Vagina (tissue), 2 donors: ENCODE measurements at regions of chr2 and their contacts with region 1.

Region 1: DNA sequence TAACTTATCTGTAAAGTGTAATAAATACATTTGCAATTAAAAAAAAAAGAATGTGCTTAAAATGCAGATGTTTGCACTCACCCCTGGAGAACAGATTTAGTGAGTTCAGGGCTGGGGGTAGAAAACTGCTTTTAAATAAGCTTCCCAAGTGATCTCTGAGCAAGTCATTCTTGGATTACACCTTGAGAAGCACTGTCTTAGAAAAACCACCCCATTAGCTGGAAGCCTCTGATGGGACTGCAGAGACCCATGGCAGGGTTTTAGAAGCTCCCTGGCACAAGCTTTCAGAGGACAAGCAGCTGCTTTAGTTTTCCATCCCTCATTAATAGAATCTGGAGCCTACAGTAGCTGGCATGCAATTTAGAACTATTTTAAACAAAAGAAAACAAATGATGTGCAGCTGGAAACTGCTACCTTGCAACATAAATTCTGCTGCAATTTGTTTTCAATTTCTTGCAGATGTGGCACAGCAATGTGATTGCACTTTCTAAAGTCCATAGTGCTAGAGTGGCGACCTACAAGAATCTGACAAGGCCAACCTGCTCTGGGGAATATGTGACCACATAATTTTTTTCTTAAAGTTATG is 141.5 kb downstream of the CDC42EP3 start:
- DNase-seq: no peak
- H3K4me3 ChIP-seq: no peak overlapping the region
- H3K27ac ChIP-seq: no peak overlapping the region
- H3K4me1 ChIP-seq: no peaks in the 10 kb centered on the region
- H3K27me3 ChIP-seq: no peaks in the 10 kb centered on the region
- CTCF ChIP-seq: no peak
- POLR2A ChIP-seq: no peak

Region 2: DNA sequence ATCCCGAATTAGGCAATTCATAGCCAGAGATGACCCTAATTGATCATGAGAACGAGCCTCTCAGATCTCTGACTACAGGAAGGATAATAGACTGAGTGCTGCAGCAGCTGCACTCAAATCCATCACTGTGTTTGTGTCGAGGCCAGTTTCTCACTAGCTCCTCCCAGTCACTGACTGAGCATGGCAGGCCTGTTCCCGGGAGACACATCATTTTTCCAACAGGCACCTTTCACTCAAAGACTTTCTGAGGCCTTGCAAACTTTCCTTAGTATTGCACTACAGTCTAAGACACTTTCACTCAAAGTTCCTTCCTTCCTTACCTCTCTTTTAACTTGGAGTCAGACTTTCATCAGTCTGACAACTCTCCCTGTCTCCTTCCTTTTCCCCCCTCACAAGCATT is 1577.2 kb after region 1 on chr2:
- intact Hi-C with region 1: loop called (anchors 5 kb)
- DNase-seq: no peak
- H3K4me3 ChIP-seq: no peak overlapping the region
- H3K27ac ChIP-seq: no peak overlapping the region
- H3K4me1 ChIP-seq: peaks cover 36% of the 10 kb centered on the region
- H3K27me3 ChIP-seq: no peaks in the 10 kb centered on the region
- CTCF ChIP-seq: no peak
- POLR2A ChIP-seq: no peak